Activated naive CD4-positive, alpha-beta T cell treated with anti-CD3 and anti-CD28 coated beads, Interleukin-2, amount 10 ng/mL, durations not matched to agents 7 days and 5 days (primary cell): ENCODE measurements at regions of chr18 and their contacts with region 1.

Region 1: DNA sequence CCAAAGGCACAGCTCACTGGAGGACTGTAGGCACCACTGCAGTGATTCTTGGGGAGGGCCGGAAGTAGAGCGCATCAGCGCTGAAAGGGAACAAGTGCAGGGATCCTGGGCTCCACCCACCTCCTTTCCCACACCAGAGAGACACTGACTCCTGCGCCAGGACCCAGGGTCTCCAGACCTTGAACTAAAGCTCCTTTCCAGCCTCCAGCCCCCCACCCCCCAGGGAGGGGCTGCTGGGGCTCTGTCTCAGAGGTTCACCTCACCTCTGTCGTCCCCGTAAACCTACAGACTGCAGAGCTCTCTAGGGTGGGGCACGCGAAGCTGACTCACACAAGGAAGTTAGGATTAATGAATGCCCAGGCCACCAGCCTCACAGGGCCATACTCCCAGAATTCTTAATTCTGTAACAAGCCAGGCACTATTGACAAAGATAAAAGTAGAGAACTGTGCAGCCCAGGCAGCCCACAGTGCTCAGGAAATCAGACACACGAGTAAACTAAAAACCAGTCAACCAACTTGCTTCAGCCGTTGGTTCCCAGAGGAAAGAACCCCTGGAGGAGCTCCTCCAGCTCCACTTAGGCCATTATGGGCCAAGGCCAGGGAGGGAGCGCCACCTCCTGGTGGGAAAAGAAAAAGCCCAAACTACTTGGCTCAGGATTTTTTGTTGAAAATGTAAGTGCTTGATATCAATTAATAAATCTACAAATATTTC is 45.1 kb upstream of the ACAA2 start:
- DNase-seq: peak; percentile 72
- H3K4me3 Mint-ChIP-seq: no peak overlapping the region
- H3K27ac Mint-ChIP-seq: no peak overlapping the region
- H3K4me1 Mint-ChIP-seq: no peaks in the 10 kb centered on the region
- H3K27me3 Mint-ChIP-seq: peaks cover 4% of the 10 kb centered on the region

Region 2: GRCh38 chr18:49510393-49511115 is 347.9 kb before region 1 on chr18:
- CTCF ChIA-PET with region 1: interaction called, 79 read pairs
- DNase-seq: peak; percentile 65
- H3K4me3 Mint-ChIP-seq: no peak overlapping the region
- H3K27ac Mint-ChIP-seq: no peak overlapping the region
- H3K4me1 Mint-ChIP-seq: no peaks in the 10 kb centered on the region
- H3K27me3 Mint-ChIP-seq: peaks cover 16% of the 10 kb centered on the region

Region 3: GRCh38 chr18:49561289-49562193 is 296.9 kb before region 1 on chr18 and contains the start of gene LIPG:
- CTCF ChIA-PET with region 1: interaction called, 117 read pairs
- DNase-seq: peak; percentile 71
- H3K4me3 Mint-ChIP-seq: peak within 1 kb of the TSS; percentile 55
- H3K27ac Mint-ChIP-seq: no peak within 1 kb of the TSS
- H3K4me1 Mint-ChIP-seq: peaks cover 31% of the 10 kb centered on the region
- H3K27me3 Mint-ChIP-seq: peaks cover 91% of the 10 kb centered on the region

Region 4: GRCh38 chr18:49725809-49726674 is 132.4 kb before region 1 on chr18:
- CTCF ChIA-PET with region 1: interaction called, 10 read pairs
- DNase-seq: no peak
- H3K4me3 Mint-ChIP-seq: no peak overlapping the region
- H3K27ac Mint-ChIP-seq: no peak overlapping the region
- H3K4me1 Mint-ChIP-seq: no peaks in the 10 kb centered on the region
- H3K27me3 Mint-ChIP-seq: peaks cover 26% of the 10 kb centered on the region

Region 5: DNA sequence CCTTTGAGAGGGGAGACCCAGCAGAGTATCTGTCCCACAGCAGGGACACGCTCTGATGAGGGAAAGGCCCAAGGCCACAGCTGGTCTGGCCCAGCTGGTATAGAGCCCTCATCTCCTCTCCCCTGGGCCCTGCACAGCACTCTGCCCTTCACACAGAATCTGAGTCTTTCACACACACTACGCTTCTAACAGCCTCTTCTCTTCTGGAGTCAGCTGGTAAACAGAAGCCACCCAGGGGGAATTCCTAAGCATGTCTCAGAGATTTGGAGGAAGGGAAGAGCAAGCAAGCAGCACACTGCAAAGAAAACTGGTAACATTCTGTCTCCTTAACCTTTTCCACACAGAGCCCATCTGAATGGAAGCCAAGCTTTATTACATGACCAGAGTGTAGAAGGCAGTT is 76.0 kb after region 1 on chr18:
- CTCF ChIA-PET with region 1: no interaction called
- DNase-seq: no peak
- H3K4me3 Mint-ChIP-seq: no peak overlapping the region
- H3K27ac Mint-ChIP-seq: no peak overlapping the region
- H3K4me1 Mint-ChIP-seq: no peaks in the 10 kb centered on the region
- H3K27me3 Mint-ChIP-seq: peaks cover 19% of the 10 kb centered on the region